ENCODE measurements at regions of chr7 and their contacts with region 1.

Region 1: GRCh38 chr7:8285099-8285498 is 23.1 kb upstream of the ICA1 start:
- DNase-seq: no peak
- H3K4me3 ChIP-seq: no peak overlapping the region
- H3K4me3 Mint-ChIP-seq: no peak overlapping the region
- H3K27ac ChIP-seq: no peak overlapping the region
- H3K27ac Mint-ChIP-seq: no peak overlapping the region
- H3K4me1 ChIP-seq: no peaks in the 10 kb centered on the region
- H3K4me1 Mint-ChIP-seq: no peaks in the 10 kb centered on the region
- H3K27me3 ChIP-seq: no peaks in the 10 kb centered on the region
- H3K27me3 Mint-ChIP-seq: peaks cover 11 to 14% of the 10 kb centered on the region in 2 donors

Region 2: GRCh38 chr7:8172372-8173354 is 112.4 kb before region 1 on chr7:
- CTCF ChIA-PET with region 1: no interaction called
- POLR2A ChIA-PET with region 1: no interaction called
- DNase-seq: no peak
- H3K4me3 ChIP-seq: no peak overlapping the region
- H3K4me3 Mint-ChIP-seq: no peak overlapping the region
- H3K27ac ChIP-seq: no peak overlapping the region
- H3K27ac Mint-ChIP-seq: peak overlapping the region in 3 of 8 donors; percentile 29 to 33 (median 30)
- H3K4me1 ChIP-seq: peaks cover 32% of the 10 kb centered on the region
- H3K4me1 Mint-ChIP-seq: peaks cover 41 to 58% (median 46%) of the 10 kb centered on the region in 3 donors
- H3K27me3 ChIP-seq: no peaks in the 10 kb centered on the region
- H3K27me3 Mint-ChIP-seq: no peaks in the 10 kb centered on the region

Region 3: DNA sequence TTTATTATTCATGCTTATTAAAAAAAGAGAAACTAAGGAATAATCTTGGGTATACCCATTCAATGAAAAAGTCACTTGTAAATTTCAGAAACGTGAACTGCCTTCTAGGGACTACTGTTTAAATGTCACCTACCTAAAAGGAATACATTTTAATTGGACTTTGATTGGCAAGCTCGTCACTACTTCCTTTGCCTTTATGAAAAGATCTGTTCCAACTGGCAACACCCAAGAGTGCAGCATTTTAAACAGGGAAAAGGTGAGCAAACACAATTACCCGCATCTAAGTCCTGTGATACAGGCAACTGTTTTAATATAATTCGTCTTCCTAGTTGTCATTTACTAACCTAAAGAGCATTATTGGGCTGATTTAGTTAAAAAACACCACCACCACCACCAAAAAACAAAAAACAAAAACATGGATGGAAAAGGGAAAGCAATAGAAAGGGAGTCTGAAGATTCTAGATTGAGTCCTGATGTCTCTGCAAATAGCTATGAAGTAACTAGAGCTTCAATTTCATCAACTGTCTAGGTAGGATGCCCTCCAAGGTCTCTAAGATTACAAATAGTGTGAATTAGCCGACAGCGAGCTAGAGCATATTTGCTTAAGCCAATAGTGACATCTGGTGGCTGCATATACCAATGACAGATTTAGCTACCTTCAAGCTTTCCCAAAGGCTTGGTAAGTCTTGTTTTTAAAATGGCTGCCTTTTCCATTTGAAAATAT is 10.7 kb after region 1 on chr7:
- CTCF ChIA-PET with region 1: interaction called, 10 read pairs
- POLR2A ChIA-PET with region 1: no interaction called
- DNase-seq: peak in 4 of 5 donors; percentile 14 to 53 (median 42)
- H3K4me3 ChIP-seq: no peak overlapping the region
- H3K4me3 Mint-ChIP-seq: no peak overlapping the region
- H3K27ac ChIP-seq: no peak overlapping the region
- H3K27ac Mint-ChIP-seq: no peak overlapping the region
- H3K4me1 ChIP-seq: no peaks in the 10 kb centered on the region
- H3K4me1 Mint-ChIP-seq: peaks cover 0 to 2% (median 2%) of the 10 kb centered on the region in 3 donors
- H3K27me3 ChIP-seq: no peaks in the 10 kb centered on the region
- H3K27me3 Mint-ChIP-seq: peaks cover 3 to 34% of the 10 kb centered on the region in 2 donors